T-cell (primary cell): ENCODE measurements at regions of chr15 and their contacts with region 1.

Region 1: DNA sequence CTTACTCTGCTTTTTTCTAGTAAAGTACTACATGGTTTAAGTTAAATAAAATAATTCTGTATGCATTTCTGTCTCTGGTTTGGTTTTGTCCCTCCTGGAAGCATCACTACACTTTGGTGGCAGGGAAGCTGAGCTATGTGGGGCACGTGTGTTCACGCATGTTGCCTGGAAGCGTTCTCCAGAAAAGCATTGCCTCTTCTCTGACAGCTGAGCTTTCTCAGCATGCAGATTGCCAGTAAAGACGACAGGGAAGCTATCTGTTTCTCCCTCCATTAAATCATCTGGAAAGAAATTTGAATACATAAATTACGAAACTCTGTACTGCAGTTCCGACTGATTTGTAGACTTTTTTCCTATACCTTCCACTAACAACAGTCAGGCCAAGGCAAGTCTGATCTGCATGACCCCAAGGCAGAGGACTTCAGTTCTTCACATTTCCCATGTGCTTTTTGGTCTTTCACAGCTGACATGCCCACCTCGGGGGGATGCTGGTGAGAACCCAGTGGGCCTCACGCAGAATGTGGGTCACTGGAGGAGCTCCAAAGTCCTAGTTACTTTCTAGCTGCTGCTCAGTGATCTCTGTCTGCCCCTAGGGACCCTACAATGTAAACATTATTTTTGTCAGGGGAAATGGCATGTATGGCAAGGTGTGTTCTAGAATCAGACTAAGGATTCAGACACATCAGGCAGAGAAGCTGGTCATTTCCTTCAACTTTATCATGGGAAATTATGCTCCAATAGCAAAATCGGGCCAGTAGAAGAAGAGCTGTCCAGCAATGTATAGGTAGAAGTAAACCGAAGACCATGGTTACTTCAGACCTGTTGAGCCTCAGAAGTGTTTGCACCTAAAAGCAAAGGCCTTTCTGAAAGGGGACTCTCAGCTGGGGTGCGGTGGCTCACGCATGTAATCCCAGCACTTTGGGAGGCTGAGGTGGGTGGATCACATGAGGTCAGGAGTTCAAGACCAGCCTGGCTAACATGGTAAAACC is 42.8 kb downstream of the PGPEP1L start:
- DNase-seq: no peak
- ATAC-seq: no peak
- H3K4me3 ChIP-seq: no peak overlapping the region
- H3K4me3 Mint-ChIP-seq: no peak overlapping the region
- H3K27ac ChIP-seq: no peak overlapping the region
- H3K27ac Mint-ChIP-seq: no peak overlapping the region
- H3K4me1 ChIP-seq: no peaks in the 10 kb centered on the region
- H3K4me1 Mint-ChIP-seq: no peaks in the 10 kb centered on the region
- H3K27me3 ChIP-seq: peaks cover 0 to 3% of the 10 kb centered on the region in 2 experiments
- H3K27me3 Mint-ChIP-seq: peaks cover 0 to 10% of the 10 kb centered on the region in 2 donors

Region 2: DNA sequence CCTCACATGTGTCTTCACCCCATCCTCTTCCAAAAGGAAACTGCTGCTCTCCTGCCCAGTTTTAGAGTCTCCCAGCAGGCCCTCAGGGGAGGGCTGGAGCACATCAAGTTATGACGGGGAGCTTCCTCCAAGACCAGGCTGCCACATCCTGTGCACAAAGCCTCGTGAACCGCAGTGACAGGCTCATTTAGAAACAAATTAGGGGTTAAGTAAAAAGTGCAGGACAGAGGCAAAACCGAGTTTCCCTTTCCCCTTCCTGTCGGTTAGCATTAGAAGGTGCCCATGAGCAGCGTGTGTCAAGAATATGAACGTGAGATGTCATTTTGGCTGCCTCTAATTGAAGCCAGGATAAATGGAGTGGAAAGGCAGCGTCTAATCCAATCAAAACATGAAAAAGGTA is 804.5 kb before region 1 on chr15:
- CTCF ChIA-PET with region 1: no interaction called
- POLR2A ChIA-PET with region 1: no interaction called
- DNase-seq: peak in 26 of 35 experiments; percentile 9 to 66 (median 32)
- ATAC-seq: peak; percentile 32 to 81 (median 58)
- H3K4me3 ChIP-seq: peak overlapping the region in 1 of 2 donors; percentile 4
- H3K4me3 Mint-ChIP-seq: no peak overlapping the region
- H3K27ac ChIP-seq: no peak overlapping the region
- H3K27ac Mint-ChIP-seq: no peak overlapping the region
- H3K4me1 ChIP-seq: peaks cover 7 to 11% of the 10 kb centered on the region in 2 experiments
- H3K4me1 Mint-ChIP-seq: peaks cover 14 to 21% (median 14%) of the 10 kb centered on the region in 3 donors
- H3K27me3 ChIP-seq: peaks cover 0 to 11% of the 10 kb centered on the region in 2 experiments
- H3K27me3 Mint-ChIP-seq: peaks cover 0 to under 1% of the 10 kb centered on the region in 2 donors

Region 3: GRCh38 chr15:98581715-98582114 is 383.0 kb before region 1 on chr15:
- CTCF ChIA-PET with region 1: interaction called in 1 of 2 experiments, 10 read pairs
- POLR2A ChIA-PET with region 1: no interaction called
- DNase-seq: peak in 1 of 35 experiments; percentile 34
- ATAC-seq: peak in 2 of 4 experiments; percentile 58 to 71
- H3K4me3 ChIP-seq: no peak overlapping the region
- H3K4me3 Mint-ChIP-seq: no peak overlapping the region
- H3K27ac ChIP-seq: no peak overlapping the region
- H3K27ac Mint-ChIP-seq: no peak overlapping the region
- H3K4me1 ChIP-seq: peaks cover 0 to 3% of the 10 kb centered on the region in 2 experiments
- H3K4me1 Mint-ChIP-seq: peaks cover 4 to 7% (median 7%) of the 10 kb centered on the region in 3 donors
- H3K27me3 ChIP-seq: peaks cover 6 to 28% of the 10 kb centered on the region in 2 experiments
- H3K27me3 Mint-ChIP-seq: peaks cover 17 to 33% of the 10 kb centered on the region in 2 donors

Region 4: GRCh38 chr15:99052205-99052604 is 87.4 kb after region 1 on chr15:
- CTCF ChIA-PET with region 1: no interaction called
- POLR2A ChIA-PET with region 1: no interaction called
- DNase-seq: no peak
- ATAC-seq: peak in 1 of 4 experiments; percentile 35
- H3K4me3 ChIP-seq: no peak overlapping the region
- H3K4me3 Mint-ChIP-seq: no peak overlapping the region
- H3K27ac ChIP-seq: no peak overlapping the region
- H3K27ac Mint-ChIP-seq: no peak overlapping the region
- H3K4me1 ChIP-seq: no peaks in the 10 kb centered on the region
- H3K4me1 Mint-ChIP-seq: peaks cover 4 to 7% (median 5%) of the 10 kb centered on the region in 3 donors
- H3K27me3 ChIP-seq: peaks cover 0 to 10% of the 10 kb centered on the region in 2 experiments
- H3K27me3 Mint-ChIP-seq: peaks cover 8 to 11% of the 10 kb centered on the region in 2 donors